Naive thymus-derived CD4-positive, alpha-beta T cell (primary cell): ENCODE measurements at regions of chr15 and their contacts with region 1.

Region 1: GRCh38 chr15:82809404-82810060 is at the start of gene WHAMM:
- DNase-seq: peak; percentile 85 to 97 (median 94)
- ATAC-seq: peak; percentile 96
- H3K4me3 ChIP-seq: peak within 1 kb of the TSS; percentile 73
- H3K4me3 Mint-ChIP-seq: peak within 1 kb of the TSS; percentile 89 to 99 (median 95)
- H3K27ac ChIP-seq: peak within 1 kb of the TSS; percentile 100
- H3K27ac Mint-ChIP-seq: peak within 1 kb of the TSS; percentile 92 to 100 (median 97)
- H3K4me1 ChIP-seq: peaks cover 8 to 22% of the 10 kb centered on the region in 2 donors
- H3K4me1 Mint-ChIP-seq: peaks cover 21 to 44% (median 33%) of the 10 kb centered on the region in 7 donors
- H3K27me3 ChIP-seq: no peaks in the 10 kb centered on the region
- H3K27me3 Mint-ChIP-seq: peaks cover 0 to 21% (median 0%) of the 10 kb centered on the region in 5 donors
- total RNA-seq, gene WHAMM: 14.1 to 72.2 (median 37.1) TPM

Region 2: GRCh38 chr15:81296673-81297072 is 1512.9 kb before region 1 on chr15:
- CTCF ChIA-PET with region 1: no interaction called
- POLR2A ChIA-PET with region 1: no interaction called
- intact Hi-C with region 1: loop called in 1 of 2 experiments (anchors 10 kb)
- DNase-seq: peak; percentile 38 to 87 (median 81)
- ATAC-seq: peak; percentile 69
- H3K4me3 ChIP-seq: peak overlapping the region; percentile 74
- H3K4me3 Mint-ChIP-seq: peak overlapping the region; percentile 80 to 100 (median 98)
- H3K27ac ChIP-seq: peak overlapping the region; percentile 87
- H3K27ac Mint-ChIP-seq: peak overlapping the region; percentile 93 to 100 (median 96)
- H3K4me1 ChIP-seq: peaks cover 52 to 59% of the 10 kb centered on the region in 2 donors
- H3K4me1 Mint-ChIP-seq: peaks cover 34 to 66% (median 64%) of the 10 kb centered on the region in 7 donors
- H3K27me3 ChIP-seq: no peaks in the 10 kb centered on the region
- H3K27me3 Mint-ChIP-seq: no peaks in the 10 kb centered on the region

Region 3: DNA sequence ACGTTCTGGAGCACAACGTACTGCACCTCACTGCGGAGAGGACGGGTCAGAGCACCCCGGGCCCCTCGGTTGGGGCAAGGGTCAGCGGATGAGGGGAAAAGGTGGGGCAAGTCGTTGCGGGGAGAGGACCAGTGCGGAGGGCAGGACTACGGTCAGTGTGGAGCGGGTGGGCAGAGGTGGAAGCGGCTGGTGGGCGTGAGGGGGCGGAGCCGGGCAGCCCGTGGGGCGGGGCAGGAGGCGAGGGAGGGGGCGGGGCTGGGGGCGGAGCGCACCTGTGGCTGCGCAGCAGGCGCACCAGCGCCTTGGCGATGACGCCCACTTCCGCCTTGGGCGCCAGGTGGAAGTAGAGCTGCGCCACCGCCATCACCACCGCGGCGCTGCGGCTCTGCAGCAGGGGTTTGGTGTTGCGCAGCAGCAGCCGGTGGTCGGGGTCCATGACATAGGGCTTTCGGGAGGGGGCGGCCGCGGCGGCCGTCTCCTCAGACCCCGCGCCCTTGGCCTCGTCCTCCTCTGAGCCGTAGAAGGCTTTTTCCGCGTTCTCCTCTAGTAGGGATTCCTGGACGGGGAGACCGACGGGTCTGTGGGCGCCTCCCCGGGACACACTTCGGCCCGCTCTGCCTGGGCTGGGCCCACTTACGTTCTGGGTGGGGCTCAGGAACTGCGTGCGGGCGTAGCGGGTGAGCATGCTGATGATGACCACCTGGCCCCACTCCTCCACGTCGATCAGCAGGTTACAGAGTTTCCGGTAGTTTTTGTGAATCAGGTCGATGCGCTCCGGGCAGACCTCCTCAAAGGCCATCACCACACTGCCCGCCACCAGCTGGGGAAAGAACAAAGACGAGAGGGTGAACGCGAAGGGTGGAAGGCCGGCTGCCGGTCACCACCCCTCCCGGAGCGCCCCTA is 129.1 kb before region 1 on chr15:
- CTCF ChIA-PET with region 1: no interaction called
- POLR2A ChIA-PET with region 1: interaction called, 24 read pairs
- intact Hi-C with region 1: loop called in 1 of 2 experiments (anchors 1 kb)
- DNase-seq: peak; percentile 47 to 88 (median 82)
- ATAC-seq: peak; percentile 98
- H3K4me3 ChIP-seq: peak overlapping the region; percentile 97
- H3K4me3 Mint-ChIP-seq: peak overlapping the region; percentile 82 to 96 (median 93)
- H3K27ac ChIP-seq: peak overlapping the region; percentile 83
- H3K27ac Mint-ChIP-seq: peak overlapping the region in 8 of 9 donors; percentile 91 to 97 (median 94)
- H3K4me1 ChIP-seq: peaks cover 9% of the 10 kb centered on the region in 2 donors
- H3K4me1 Mint-ChIP-seq: peaks cover 0 to 19% (median 14%) of the 10 kb centered on the region in 7 donors
- H3K27me3 ChIP-seq: no peaks in the 10 kb centered on the region
- H3K27me3 Mint-ChIP-seq: peaks cover 0 to 42% (median 0%) of the 10 kb centered on the region in 5 donors

Region 4: GRCh38 chr15:82737975-82738374 is 71.6 kb before region 1 on chr15:
- CTCF ChIA-PET with region 1: no interaction called
- POLR2A ChIA-PET with region 1: no interaction called
- intact Hi-C with region 1: no loop called
- DNase-seq: no peak
- ATAC-seq: no peak
- H3K4me3 ChIP-seq: no peak overlapping the region
- H3K4me3 Mint-ChIP-seq: no peak overlapping the region
- H3K27ac ChIP-seq: no peak overlapping the region
- H3K27ac Mint-ChIP-seq: no peak overlapping the region
- H3K4me1 ChIP-seq: no peaks in the 10 kb centered on the region
- H3K4me1 Mint-ChIP-seq: peaks cover 0 to 6% (median 0%) of the 10 kb centered on the region in 7 donors
- H3K27me3 ChIP-seq: no peaks in the 10 kb centered on the region
- H3K27me3 Mint-ChIP-seq: no peaks in the 10 kb centered on the region

Region 5: GRCh38 chr15:82832601-82833361 is 23.2 kb after region 1 on chr15:
- CTCF ChIA-PET with region 1: no interaction called
- POLR2A ChIA-PET with region 1: interaction called, 4 read pairs
- intact Hi-C with region 1: loop called (anchors 1 to 2 kb)
- DNase-seq: no peak
- ATAC-seq: peak; percentile 44
- H3K4me3 ChIP-seq: no peak overlapping the region
- H3K4me3 Mint-ChIP-seq: peak overlapping the region in 2 of 10 donors; percentile 8 to 65
- H3K27ac ChIP-seq: no peak overlapping the region
- H3K27ac Mint-ChIP-seq: peak overlapping the region in 4 of 9 donors; percentile 28 to 95 (median 50)
- H3K4me1 ChIP-seq: no peaks in the 10 kb centered on the region
- H3K4me1 Mint-ChIP-seq: peaks cover 3 to 55% (median 15%) of the 10 kb centered on the region in 7 donors
- H3K27me3 ChIP-seq: no peaks in the 10 kb centered on the region
- H3K27me3 Mint-ChIP-seq: no peaks in the 10 kb centered on the region

Region 6: DNA sequence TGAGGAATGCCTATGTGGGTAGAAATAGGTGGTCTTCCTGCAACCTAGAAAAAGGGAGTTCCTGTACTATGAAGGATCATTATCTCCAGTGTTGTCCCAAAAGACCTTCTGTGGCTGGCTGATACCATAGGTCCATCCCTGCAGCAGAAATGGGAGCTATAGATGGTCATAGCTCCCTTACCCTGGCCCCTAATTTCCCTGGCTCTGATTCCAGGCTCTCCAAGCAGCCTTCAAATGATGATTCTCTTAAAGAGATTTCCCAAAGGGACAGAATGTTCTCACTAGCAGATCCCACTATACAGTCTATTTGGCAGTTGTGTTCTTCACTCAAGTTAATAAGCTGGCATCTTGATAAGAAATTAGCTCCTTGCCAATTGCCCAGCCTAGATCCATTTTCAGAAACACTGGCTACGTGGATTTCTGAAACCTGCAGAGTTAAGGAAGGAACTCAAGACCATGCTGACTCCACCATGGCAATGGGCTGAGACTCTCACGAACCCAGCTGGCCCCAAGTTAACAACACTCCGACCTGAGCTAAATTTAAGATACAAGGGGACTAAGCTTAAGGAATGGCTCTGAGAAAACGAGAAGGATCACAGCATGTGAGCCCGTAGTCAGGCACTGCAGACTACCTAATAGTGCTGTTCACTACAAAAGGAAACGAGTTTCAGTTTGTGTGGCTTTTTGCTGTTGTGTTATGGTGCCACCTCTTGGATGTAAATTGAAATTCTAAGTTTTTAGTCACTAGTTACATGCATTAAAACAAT is 190.6 kb after region 1 on chr15:
- CTCF ChIA-PET with region 1: no interaction called
- POLR2A ChIA-PET with region 1: no interaction called
- intact Hi-C with region 1: loop called in 1 of 2 experiments (anchors 5 kb)
- DNase-seq: peak in 8 of 9 donors; percentile 13 to 68 (median 50)
- ATAC-seq: peak; percentile 94
- H3K4me3 ChIP-seq: peak overlapping the region; percentile 21
- H3K4me3 Mint-ChIP-seq: peak overlapping the region; percentile 59 to 87 (median 81)
- H3K27ac ChIP-seq: peak overlapping the region; percentile 62
- H3K27ac Mint-ChIP-seq: peak overlapping the region; percentile 44 to 92 (median 83)
- H3K4me1 ChIP-seq: peaks cover 3 to 5% of the 10 kb centered on the region in 2 donors
- H3K4me1 Mint-ChIP-seq: peaks cover 0 to 13% (median 9%) of the 10 kb centered on the region in 7 donors
- H3K27me3 ChIP-seq: no peaks in the 10 kb centered on the region
- H3K27me3 Mint-ChIP-seq: no peaks in the 10 kb centered on the region

Region 7: DNA sequence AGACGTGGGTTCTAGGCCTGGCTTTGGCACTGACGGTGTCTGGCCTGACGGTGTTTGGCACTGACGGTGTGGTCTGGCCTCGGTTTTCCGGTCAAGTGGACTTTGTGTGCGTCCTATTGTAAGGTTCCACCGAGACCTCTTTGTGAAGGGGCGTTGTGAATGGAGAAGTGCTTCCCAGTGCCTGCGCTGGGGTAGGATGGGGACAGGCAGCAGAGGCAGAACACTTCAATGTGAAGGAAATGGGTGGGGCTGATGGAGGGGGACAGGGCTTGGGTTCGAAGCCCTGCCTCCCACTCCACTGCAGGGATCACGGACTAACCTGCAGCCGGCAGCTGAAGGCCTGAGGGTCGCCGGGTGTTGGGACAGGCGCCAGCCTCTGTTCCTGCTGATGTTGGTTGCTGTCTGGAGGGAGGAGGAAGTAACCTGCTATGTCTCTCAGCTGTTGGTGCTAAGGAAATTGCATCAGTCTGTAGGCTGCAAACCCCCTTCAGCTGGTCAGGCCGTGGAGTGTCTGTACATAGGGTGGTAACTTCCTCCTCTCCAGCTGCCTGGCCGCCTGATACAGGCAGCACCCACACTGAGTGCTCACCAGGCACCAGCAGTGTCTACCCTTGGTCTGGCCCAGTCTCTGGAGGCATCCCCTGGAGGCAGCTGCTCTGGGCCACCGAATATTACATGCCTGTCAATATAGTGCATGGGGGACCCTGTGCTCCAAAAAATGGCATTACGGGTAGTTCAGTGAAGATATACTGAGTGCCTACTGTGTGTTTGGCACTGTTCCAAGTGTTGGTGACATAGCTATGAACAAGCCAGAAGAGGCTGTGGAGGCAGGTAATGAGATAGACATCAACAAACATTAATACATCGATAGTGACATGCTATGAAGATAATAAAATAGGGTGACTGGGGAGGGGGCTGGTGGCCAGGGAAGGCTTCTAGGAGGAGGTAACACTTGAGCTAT is 299.0 kb after region 1 on chr15:
- CTCF ChIA-PET with region 1: no interaction called
- POLR2A ChIA-PET with region 1: no interaction called
- intact Hi-C with region 1: loop called in 1 of 2 experiments (anchors 2 kb)
- DNase-seq: peak in 3 of 9 donors; percentile 15 to 30 (median 19)
- ATAC-seq: peak; percentile 89
- H3K4me3 ChIP-seq: peak overlapping the region; percentile 22
- H3K4me3 Mint-ChIP-seq: peak overlapping the region; percentile 68 to 97 (median 76)
- H3K27ac ChIP-seq: no peak overlapping the region
- H3K27ac Mint-ChIP-seq: peak overlapping the region in 1 of 9 donors; percentile 90
- H3K4me1 ChIP-seq: peaks cover 0 to 10% of the 10 kb centered on the region in 2 donors
- H3K4me1 Mint-ChIP-seq: peaks cover 11 to 38% (median 17%) of the 10 kb centered on the region in 7 donors
- H3K27me3 ChIP-seq: no peaks in the 10 kb centered on the region
- H3K27me3 Mint-ChIP-seq: peaks cover 21 to 59% (median 53%) of the 10 kb centered on the region in 5 donors